T-cell (primary cell): ENCODE measurements at regions of chr6 and their contacts with region 1.

Region 1: DNA sequence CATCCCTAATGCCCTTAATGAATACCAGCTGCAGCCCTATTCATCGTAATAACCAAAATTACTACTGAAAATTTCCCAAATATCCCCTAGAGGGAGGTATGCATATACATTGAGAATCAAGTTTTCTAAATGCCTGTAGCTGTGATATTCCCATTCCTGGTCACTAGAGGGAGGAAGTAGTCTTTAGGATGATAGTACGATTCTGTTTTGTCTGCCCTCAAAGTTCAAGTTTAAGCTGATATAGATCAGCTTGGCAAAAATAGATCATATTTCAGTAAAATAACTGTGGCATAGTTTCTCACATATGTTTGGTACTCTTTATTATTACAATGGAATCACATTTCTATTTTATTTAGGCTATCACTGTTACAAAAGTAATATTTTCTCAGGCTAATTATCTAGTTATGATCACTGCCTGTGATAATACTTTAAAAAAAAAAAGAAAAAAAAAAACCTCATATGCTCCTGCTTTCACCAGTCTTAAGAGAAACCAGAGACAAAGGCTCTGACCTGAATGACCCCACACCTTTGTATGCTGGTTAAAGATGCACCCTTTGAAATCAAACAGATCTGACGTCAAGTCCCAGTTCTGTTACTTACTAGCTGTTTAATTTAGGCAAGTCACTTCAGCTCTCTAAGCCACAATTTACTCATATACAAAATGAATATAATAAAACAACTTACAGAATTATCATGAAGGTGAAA is 11.0 kb downstream of the TSPYL1 start:
- DNase-seq: peak in 1 of 35 experiments; percentile 73
- ATAC-seq: peak; percentile 69 to 87 (median 78)
- H3K4me3 ChIP-seq: no peak overlapping the region
- H3K4me3 Mint-ChIP-seq: no peak overlapping the region
- H3K27ac ChIP-seq: no peak overlapping the region
- H3K27ac Mint-ChIP-seq: peak overlapping the region; percentile 16 to 29
- H3K4me1 ChIP-seq: no peaks in the 10 kb centered on the region
- H3K4me1 Mint-ChIP-seq: peaks cover 31 to 54% (median 37%) of the 10 kb centered on the region in 3 donors
- H3K27me3 ChIP-seq: no peaks in the 10 kb centered on the region
- H3K27me3 Mint-ChIP-seq: no peaks in the 10 kb centered on the region

Region 2: DNA sequence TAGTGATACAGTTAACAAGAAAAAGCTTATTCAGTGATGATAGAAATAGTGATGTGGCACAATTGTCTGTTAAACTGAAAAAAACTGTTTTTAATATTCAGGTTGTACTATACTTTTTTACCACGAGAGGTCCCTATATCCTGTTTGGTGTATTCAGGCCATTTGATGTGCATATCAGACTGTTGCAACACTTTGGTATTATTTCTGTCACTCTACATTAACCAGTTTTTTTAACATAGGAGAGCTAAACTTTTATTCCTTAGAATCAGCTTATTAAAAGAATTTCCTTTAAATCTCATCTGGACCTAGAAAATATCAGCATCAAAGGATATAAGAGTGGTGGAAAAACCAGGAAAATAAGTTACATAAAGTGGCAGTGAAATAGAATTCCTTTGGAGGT is 51.7 kb before region 1 on chr6:
- CTCF ChIA-PET with region 1: interaction called, 3 to 10 read pairs
- POLR2A ChIA-PET with region 1: no interaction called
- DNase-seq: peak in 1 of 35 experiments; percentile 58
- ATAC-seq: peak in 3 of 4 experiments; percentile 48 to 59 (median 54)
- H3K4me3 ChIP-seq: no peak overlapping the region
- H3K4me3 Mint-ChIP-seq: no peak overlapping the region
- H3K27ac ChIP-seq: no peak overlapping the region
- H3K27ac Mint-ChIP-seq: peak overlapping the region; percentile 19 to 66
- H3K4me1 ChIP-seq: no peaks in the 10 kb centered on the region
- H3K4me1 Mint-ChIP-seq: peaks cover 5 to 9% (median 6%) of the 10 kb centered on the region in 3 donors
- H3K27me3 ChIP-seq: no peaks in the 10 kb centered on the region
- H3K27me3 Mint-ChIP-seq: no peaks in the 10 kb centered on the region

Region 3: GRCh38 chr6:116279260-116280063 is 10.7 kb after region 1 on chr6 and contains the start of gene TSPYL1:
- CTCF ChIA-PET with region 1: interaction called, 9 to 62 read pairs
- POLR2A ChIA-PET with region 1: interaction called, 9 to 22 read pairs
- DNase-seq: peak; percentile 87 to 98 (median 94)
- ATAC-seq: peak; percentile 88 to 92 (median 92)
- H3K4me3 ChIP-seq: peak within 1 kb of the TSS; percentile 69 to 93
- H3K4me3 Mint-ChIP-seq: peak within 1 kb of the TSS; percentile 95 to 99 (median 95)
- H3K27ac ChIP-seq: peak within 1 kb of the TSS; percentile 95
- H3K27ac Mint-ChIP-seq: peak within 1 kb of the TSS; percentile 97 to 100
- H3K4me1 ChIP-seq: peaks cover 31 to 43% of the 10 kb centered on the region in 2 experiments
- H3K4me1 Mint-ChIP-seq: peaks cover 58 to 78% (median 69%) of the 10 kb centered on the region in 3 donors
- H3K27me3 ChIP-seq: no peaks in the 10 kb centered on the region
- H3K27me3 Mint-ChIP-seq: no peaks in the 10 kb centered on the region
- total RNA-seq, gene TSPYL1: 83.4 to 215 (median 86.8) TPM

Region 4: GRCh38 chr6:116531675-116532570 is 263.2 kb after region 1 on chr6:
- CTCF ChIA-PET with region 1: interaction called, 6 to 10 read pairs
- POLR2A ChIA-PET with region 1: no interaction called
- DNase-seq: peak in 34 of 35 experiments; percentile 17 to 81 (median 52)
- ATAC-seq: peak; percentile 77 to 97 (median 92)
- H3K4me3 ChIP-seq: no peak overlapping the region
- H3K4me3 Mint-ChIP-seq: no peak overlapping the region
- H3K27ac ChIP-seq: no peak overlapping the region
- H3K27ac Mint-ChIP-seq: no peak overlapping the region
- H3K4me1 ChIP-seq: no peaks in the 10 kb centered on the region
- H3K4me1 Mint-ChIP-seq: no peaks in the 10 kb centered on the region
- H3K27me3 ChIP-seq: no peaks in the 10 kb centered on the region
- H3K27me3 Mint-ChIP-seq: peaks cover 18 to 19% of the 10 kb centered on the region in 2 donors

Region 5: GRCh38 chr6:117585647-117586046 is 1316.9 kb after region 1 on chr6:
- CTCF ChIA-PET with region 1: no interaction called
- POLR2A ChIA-PET with region 1: interaction called in 1 of 2 experiments, 11 read pairs
- DNase-seq: no peak
- ATAC-seq: no peak
- H3K4me3 ChIP-seq: no peak overlapping the region
- H3K4me3 Mint-ChIP-seq: no peak overlapping the region
- H3K27ac ChIP-seq: no peak overlapping the region
- H3K27ac Mint-ChIP-seq: no peak overlapping the region
- H3K4me1 ChIP-seq: peaks cover 0 to 8% of the 10 kb centered on the region in 2 experiments
- H3K4me1 Mint-ChIP-seq: peaks cover 49 to 56% (median 53%) of the 10 kb centered on the region in 3 donors
- H3K27me3 ChIP-seq: no peaks in the 10 kb centered on the region
- H3K27me3 Mint-ChIP-seq: no peaks in the 10 kb centered on the region